ENCODE measurements at regions of chr3 and their contacts with region 1.

Region 1: DNA sequence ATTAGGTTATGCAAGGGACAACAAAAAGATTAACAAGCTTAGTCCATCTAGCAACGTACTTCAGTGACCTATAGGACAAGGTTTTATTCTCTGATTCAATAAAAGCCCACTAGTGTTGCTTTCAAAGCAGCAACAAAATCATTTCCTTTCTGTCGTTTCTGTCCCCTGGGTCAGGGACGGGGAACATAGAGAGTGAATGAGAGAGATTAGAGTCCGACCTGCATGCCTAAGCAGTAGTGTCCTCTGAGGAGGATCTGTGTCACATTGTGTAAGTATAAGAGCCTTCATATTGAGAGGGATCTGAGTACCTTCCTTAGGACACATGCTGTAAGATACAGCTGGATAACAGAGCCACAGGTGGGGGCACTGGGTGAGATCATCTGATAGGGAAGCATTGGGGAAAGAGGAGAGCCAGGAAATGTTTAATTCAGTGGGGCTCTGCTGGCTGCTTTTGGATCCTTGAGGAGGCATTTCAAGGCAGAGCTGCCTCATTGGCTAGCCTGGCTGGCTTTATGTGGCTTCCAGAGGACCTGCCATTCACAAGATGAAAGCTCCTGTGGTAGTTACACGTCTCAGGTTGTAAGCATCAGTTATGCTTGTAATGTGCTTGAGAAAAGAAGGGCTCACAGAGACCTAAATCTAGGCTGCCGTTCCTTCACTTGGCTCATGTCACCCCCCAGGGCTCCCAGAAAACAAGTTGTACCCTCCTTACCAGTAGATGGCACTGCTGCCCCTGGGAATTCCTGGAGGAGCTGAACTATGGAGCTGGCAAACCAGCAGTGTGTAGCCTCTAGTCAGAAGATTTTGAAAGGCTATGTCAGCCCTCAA is 2.7 kb downstream of the TMEM108 start:
- DNase-seq: peak; percentile 36 to 61
- H3K4me3 ChIP-seq: no peak overlapping the region
- H3K27ac ChIP-seq: no peak overlapping the region
- H3K4me1 ChIP-seq: no peaks in the 10 kb centered on the region
- H3K27me3 ChIP-seq: peaks cover 42% of the 10 kb centered on the region
- CTCF ChIP-seq: peak; percentile 74

Region 2: GRCh38 chr3:132709761-132710160 is 331.1 kb before region 1 on chr3:
- CTCF ChIA-PET with region 1: no interaction called
- POLR2A ChIA-PET with region 1: no interaction called
- intact Hi-C with region 1: no loop called
- DNase-seq: no peak
- H3K4me3 ChIP-seq: no peak overlapping the region
- H3K27ac ChIP-seq: no peak overlapping the region
- H3K4me1 ChIP-seq: no peaks in the 10 kb centered on the region
- H3K27me3 ChIP-seq: no peaks in the 10 kb centered on the region
- CTCF ChIP-seq: no peak

Region 3: GRCh38 chr3:132730891-132731580 is 309.9 kb before region 1 on chr3:
- CTCF ChIA-PET with region 1: interaction called, 5 read pairs
- POLR2A ChIA-PET with region 1: no interaction called
- intact Hi-C with region 1: loop called (anchors 5 kb)
- DNase-seq: peak in 1 of 2 experiments; percentile 25
- H3K4me3 ChIP-seq: no peak overlapping the region
- H3K27ac ChIP-seq: no peak overlapping the region
- H3K4me1 ChIP-seq: no peaks in the 10 kb centered on the region
- H3K27me3 ChIP-seq: no peaks in the 10 kb centered on the region
- CTCF ChIP-seq: peak; percentile 51; the same call in 1 of the 2 replicates

Region 4: GRCh38 chr3:133377396-133377795 is 336.5 kb after region 1 on chr3:
- CTCF ChIA-PET with region 1: no interaction called
- POLR2A ChIA-PET with region 1: no interaction called
- intact Hi-C with region 1: loop called (anchors 1 kb)
- DNase-seq: no peak
- H3K4me3 ChIP-seq: no peak overlapping the region
- H3K27ac ChIP-seq: no peak overlapping the region
- H3K4me1 ChIP-seq: 0 out of 2 replicates have a peak, but pooled peaks cover 2% of the 10 kb centered on the region
- H3K27me3 ChIP-seq: peaks cover 47% of the 10 kb centered on the region
- CTCF ChIP-seq: peak; percentile 46; the same call in 1 of the 2 replicates